ENCODE measurements at regions of chr5 and their contacts with region 1.

Region 1: GRCh38 chr5:175873088-175873454 is 1.7 kb downstream of the CPLX2 start:
- DNase-seq: no peak
- H3K4me3 ChIP-seq: no peak overlapping the region
- H3K27ac ChIP-seq: no peak overlapping the region
- H3K4me1 ChIP-seq: no peaks in the 10 kb centered on the region
- H3K27me3 ChIP-seq: peaks cover 14% of the 10 kb centered on the region
- CTCF ChIP-seq: peak in 1 of 2 donors; percentile 31

Region 2: GRCh38 chr5:175567954-175568353 is 305.1 kb before region 1 on chr5:
- CTCF ChIA-PET with region 1: no interaction called
- dilution Hi-C with region 1: no loop called
- in situ Hi-C with region 1: no loop called
- intact Hi-C with region 1: no loop called
- DNase-seq: no peak
- H3K4me3 ChIP-seq: no peak overlapping the region
- H3K27ac ChIP-seq: no peak overlapping the region
- H3K4me1 ChIP-seq: no peaks in the 10 kb centered on the region
- H3K27me3 ChIP-seq: no peaks in the 10 kb centered on the region
- CTCF ChIP-seq: no peak

Region 3: GRCh38 chr5:175796536-175797499 is 76.3 kb before region 1 on chr5:
- CTCF ChIA-PET with region 1: no interaction called
- dilution Hi-C with region 1: no loop called
- in situ Hi-C with region 1: no loop called
- intact Hi-C with region 1: loop called (anchors 1 kb)
- DNase-seq: peak; percentile 79
- H3K4me3 ChIP-seq: peak overlapping the region in 1 of 3 experiments; percentile 10
- H3K27ac ChIP-seq: no peak overlapping the region
- H3K4me1 ChIP-seq: peaks cover 7% of the 10 kb centered on the region
- H3K27me3 ChIP-seq: no peaks in the 10 kb centered on the region
- CTCF ChIP-seq: no peak

Region 4: DNA sequence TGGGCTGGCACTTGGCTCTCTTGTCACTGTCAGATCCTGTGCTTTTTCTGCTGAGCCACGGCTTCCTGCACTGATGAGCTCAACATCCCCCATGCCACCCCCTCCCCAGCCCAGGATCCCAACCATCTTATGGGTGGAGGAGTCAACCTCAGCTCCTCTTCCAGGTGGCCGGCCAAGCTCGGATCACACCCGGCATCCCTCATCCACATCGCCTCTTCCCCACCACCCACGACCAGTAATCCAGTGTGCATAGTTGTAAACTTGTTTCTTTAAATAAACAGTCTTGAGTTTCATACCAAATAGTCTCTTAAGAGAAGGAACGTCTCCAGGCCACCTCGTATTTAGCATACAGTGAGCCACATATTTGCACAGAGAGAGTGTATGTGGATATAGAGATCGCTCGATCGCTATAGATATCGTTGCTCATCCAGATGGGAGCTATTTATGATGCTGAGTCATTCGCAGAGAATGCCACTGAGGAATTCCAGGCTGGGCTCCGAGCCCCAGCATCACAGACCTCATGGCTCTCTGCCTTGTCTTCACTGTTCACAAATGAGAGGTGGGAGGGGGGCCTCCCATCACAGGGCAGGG is 63.4 kb before region 1 on chr5:
- CTCF ChIA-PET with region 1: interaction called, 14 read pairs
- dilution Hi-C with region 1: no loop called
- in situ Hi-C with region 1: no loop called
- intact Hi-C with region 1: no loop called
- DNase-seq: peak; percentile 63
- H3K4me3 ChIP-seq: no peak overlapping the region
- H3K27ac ChIP-seq: no peak overlapping the region
- H3K4me1 ChIP-seq: peaks cover 27% of the 10 kb centered on the region
- H3K27me3 ChIP-seq: peaks cover 3% of the 10 kb centered on the region
- CTCF ChIP-seq: no peak

Region 5: GRCh38 chr5:175821790-175822211 is 51.3 kb before region 1 on chr5:
- CTCF ChIA-PET with region 1: no interaction called
- dilution Hi-C with region 1: no loop called
- in situ Hi-C with region 1: no loop called
- intact Hi-C with region 1: no loop called
- DNase-seq: peak; percentile 41
- H3K4me3 ChIP-seq: no peak overlapping the region
- H3K27ac ChIP-seq: no peak overlapping the region
- H3K4me1 ChIP-seq: no peaks in the 10 kb centered on the region
- H3K27me3 ChIP-seq: no peaks in the 10 kb centered on the region
- CTCF ChIP-seq: no peak

Region 6: DNA sequence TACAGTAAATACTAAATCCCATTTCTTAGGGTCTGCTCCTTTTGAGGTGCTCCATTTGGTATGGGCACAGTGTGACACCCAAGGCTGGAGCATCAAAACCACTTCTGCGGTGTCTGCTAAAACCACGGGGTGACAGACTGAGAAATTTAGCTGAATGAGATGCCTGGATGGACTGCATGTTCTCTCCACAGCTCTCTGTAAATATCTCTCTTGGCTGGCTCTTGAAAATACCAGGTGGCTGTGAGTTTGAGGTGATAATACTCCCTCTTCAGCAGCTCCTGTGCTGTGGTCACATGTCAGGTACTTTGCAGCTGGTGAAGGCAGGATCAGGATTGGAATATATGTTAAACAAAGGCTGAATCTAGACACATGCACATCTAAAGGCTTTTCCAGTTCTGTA is 271.4 kb after region 1 on chr5:
- CTCF ChIA-PET with region 1: no interaction called
- dilution Hi-C with region 1: no loop called
- in situ Hi-C with region 1: no loop called
- intact Hi-C with region 1: no loop called
- DNase-seq: no peak
- H3K4me3 ChIP-seq: no peak overlapping the region
- H3K27ac ChIP-seq: no peak overlapping the region
- H3K4me1 ChIP-seq: no peaks in the 10 kb centered on the region
- H3K27me3 ChIP-seq: peaks cover 2% of the 10 kb centered on the region
- CTCF ChIP-seq: no peak

Region 7: GRCh38 chr5:176319827-176320554 is 446.9 kb after region 1 on chr5:
- CTCF ChIA-PET with region 1: interaction called, 27 read pairs
- dilution Hi-C with region 1: no loop called
- in situ Hi-C with region 1: no loop called
- intact Hi-C with region 1: no loop called
- DNase-seq: no peak
- H3K4me3 ChIP-seq: no peak overlapping the region
- H3K27ac ChIP-seq: no peak overlapping the region
- H3K4me1 ChIP-seq: no peaks in the 10 kb centered on the region
- H3K27me3 ChIP-seq: no peaks in the 10 kb centered on the region
- CTCF ChIP-seq: peak; percentile 18 to 27

Measured in mammary epithelial cell (primary cell).